Activated CD4-positive, alpha-beta memory T cell treated with anti-CD3 and anti-CD28 coated beads for 36 hours (primary cell): ENCODE measurements at regions of chr13 and their contacts with region 1.

Region 1: DNA sequence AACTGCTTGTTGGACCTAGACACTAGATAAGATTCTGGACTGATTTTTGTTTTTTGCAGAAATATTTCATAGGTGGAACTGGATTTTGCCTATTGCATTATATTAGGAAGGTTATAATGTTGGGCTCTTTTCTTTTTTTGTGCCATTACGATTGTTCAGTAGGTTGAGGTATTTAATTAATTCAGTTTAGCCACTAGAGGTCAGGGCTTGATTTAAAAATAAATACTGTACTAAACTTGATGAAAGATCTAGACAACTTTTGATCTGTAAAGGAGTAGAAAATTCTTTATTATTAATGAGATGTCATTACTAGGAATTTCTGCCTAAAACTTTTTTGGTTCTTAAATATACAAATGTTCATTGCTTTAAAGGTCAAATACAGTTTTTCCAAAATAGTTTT is 15.2 kb upstream of the SUPT20H start:
- DNase-seq: no peak
- H3K4me3 Mint-ChIP-seq: no peak overlapping the region
- H3K27ac Mint-ChIP-seq: no peak overlapping the region
- H3K4me1 Mint-ChIP-seq: no peaks in the 10 kb centered on the region
- H3K27me3 Mint-ChIP-seq: no peaks in the 10 kb centered on the region

Region 2: DNA sequence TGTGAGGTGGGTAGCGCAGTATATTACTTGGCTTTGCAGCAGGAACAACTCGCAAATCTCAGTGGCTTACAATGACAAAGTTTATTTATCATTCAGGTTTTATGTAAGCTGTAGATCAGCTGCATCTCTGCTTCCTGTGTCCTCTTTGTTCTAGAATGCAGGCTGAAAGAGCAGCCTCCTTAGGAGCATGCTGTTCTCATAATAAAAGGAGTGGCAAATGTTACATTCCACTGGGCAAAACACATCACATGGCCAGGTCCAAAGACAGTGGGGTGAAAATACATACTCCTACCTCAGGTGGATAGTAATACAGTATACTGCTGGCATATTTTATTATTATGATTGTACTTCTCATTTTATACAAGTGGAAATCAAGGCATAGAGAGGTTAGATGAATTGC is 31.9 kb after region 1 on chr13:
- CTCF ChIA-PET with region 1: no interaction called
- POLR2A ChIA-PET with region 1: no interaction called
- intact Hi-C with region 1: no loop called
- DNase-seq: no peak
- H3K4me3 Mint-ChIP-seq: no peak overlapping the region
- H3K27ac Mint-ChIP-seq: no peak overlapping the region
- H3K4me1 Mint-ChIP-seq: no peaks in the 10 kb centered on the region
- H3K27me3 Mint-ChIP-seq: peaks cover 5% of the 10 kb centered on the region

Region 3: GRCh38 chr13:37277435-37278144 is 202.9 kb after region 1 on chr13:
- CTCF ChIA-PET with region 1: no interaction called
- POLR2A ChIA-PET with region 1: no interaction called
- intact Hi-C with region 1: no loop called
- DNase-seq: no peak
- H3K4me3 Mint-ChIP-seq: no peak overlapping the region
- H3K27ac Mint-ChIP-seq: no peak overlapping the region
- H3K4me1 Mint-ChIP-seq: no peaks in the 10 kb centered on the region
- H3K27me3 Mint-ChIP-seq: no peaks in the 10 kb centered on the region

Region 4: DNA sequence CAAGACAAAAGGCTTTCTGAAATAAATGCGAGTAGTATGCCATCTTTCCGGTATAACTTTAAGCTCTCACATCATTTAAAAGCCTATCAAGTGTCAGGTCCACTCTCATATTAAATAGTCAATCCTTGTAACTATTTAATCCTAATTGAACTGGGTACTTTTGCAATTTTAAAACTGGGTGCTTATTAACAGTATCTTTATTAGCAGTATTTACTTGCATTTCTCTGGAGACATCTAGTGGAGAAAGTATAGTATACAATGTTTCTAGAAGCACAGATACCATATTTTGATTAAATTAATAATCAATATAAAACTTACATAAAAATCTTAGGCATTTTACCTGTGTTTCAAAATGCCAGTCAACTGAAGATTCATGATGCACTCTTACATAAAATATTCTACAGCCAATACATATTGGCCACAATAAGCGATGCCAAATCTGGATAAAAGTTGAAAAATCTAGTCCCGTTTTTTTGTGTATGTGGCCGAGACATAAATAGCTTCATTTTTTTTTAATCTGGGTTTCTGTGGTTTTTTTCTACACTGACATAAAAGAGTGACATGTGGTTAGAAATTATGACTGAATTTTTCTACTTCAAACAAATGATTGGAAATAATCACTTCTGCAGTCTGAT is 528.2 kb after region 1 on chr13:
- CTCF ChIA-PET with region 1: no interaction called
- POLR2A ChIA-PET with region 1: no interaction called
- intact Hi-C with region 1: loop called (anchors 10 kb)
- DNase-seq: no peak
- H3K4me3 Mint-ChIP-seq: no peak overlapping the region
- H3K27ac Mint-ChIP-seq: no peak overlapping the region
- H3K4me1 Mint-ChIP-seq: no peaks in the 10 kb centered on the region
- H3K27me3 Mint-ChIP-seq: no peaks in the 10 kb centered on the region

Region 5: DNA sequence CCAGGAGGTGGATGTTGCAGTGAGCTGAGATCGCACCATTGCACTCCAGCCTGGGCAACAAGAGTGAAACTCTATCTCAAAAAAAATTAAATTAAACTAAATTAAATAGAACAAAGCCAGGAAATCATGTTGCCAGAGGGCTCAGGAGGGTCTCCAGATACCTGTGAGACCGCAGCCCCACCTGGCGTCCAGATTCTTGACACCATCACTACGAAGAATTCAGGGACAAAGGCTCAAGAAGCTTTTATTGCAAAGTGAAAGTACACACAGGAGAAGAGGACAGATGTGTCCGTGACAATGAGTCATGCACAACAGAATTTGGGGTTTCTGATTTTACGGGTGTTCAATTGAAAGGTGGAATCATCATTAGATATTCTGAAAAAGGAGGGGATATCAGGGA is 1839.4 kb after region 1 on chr13:
- CTCF ChIA-PET with region 1: no interaction called
- POLR2A ChIA-PET with region 1: no interaction called
- intact Hi-C with region 1: loop called (anchors 10 kb)
- DNase-seq: no peak
- H3K4me3 Mint-ChIP-seq: no peak overlapping the region
- H3K27ac Mint-ChIP-seq: no peak overlapping the region
- H3K4me1 Mint-ChIP-seq: no peaks in the 10 kb centered on the region
- H3K27me3 Mint-ChIP-seq: peaks cover 11% of the 10 kb centered on the region